Right cardiac atrium (tissue), 5 donors: ENCODE measurements at regions of chr1 and their contacts with region 1.

Region 1: GRCh38 chr1:9494929-9495758 is 44.1 kb upstream of the SLC25A33 start:
- DNase-seq: peak; percentile 55 to 86 (median 83)
- ATAC-seq: peak; percentile 68 to 75
- H3K4me3 ChIP-seq: no peak overlapping the region
- H3K27ac ChIP-seq: no peak overlapping the region
- H3K4me1 ChIP-seq: no peaks in the 10 kb centered on the region
- H3K27me3 ChIP-seq: no peaks in the 10 kb centered on the region

Region 2: GRCh38 chr1:9128520-9129265 is 366.5 kb before region 1 on chr1 and contains the start of gene GPR157:
- intact Hi-C with region 1: no loop called
- DNase-seq: peak; percentile 92 to 97 (median 97)
- ATAC-seq: peak; percentile 96 to 97
- H3K4me3 ChIP-seq: peak within 1 kb of the TSS; percentile 48
- H3K27ac ChIP-seq: peak within 1 kb of the TSS; percentile 82
- H3K4me1 ChIP-seq: no peaks in the 10 kb centered on the region
- H3K27me3 ChIP-seq: no peaks in the 10 kb centered on the region
- total RNA-seq, gene GPR157: 23.3 to 28.7 (median 25.9) TPM

Region 3: DNA sequence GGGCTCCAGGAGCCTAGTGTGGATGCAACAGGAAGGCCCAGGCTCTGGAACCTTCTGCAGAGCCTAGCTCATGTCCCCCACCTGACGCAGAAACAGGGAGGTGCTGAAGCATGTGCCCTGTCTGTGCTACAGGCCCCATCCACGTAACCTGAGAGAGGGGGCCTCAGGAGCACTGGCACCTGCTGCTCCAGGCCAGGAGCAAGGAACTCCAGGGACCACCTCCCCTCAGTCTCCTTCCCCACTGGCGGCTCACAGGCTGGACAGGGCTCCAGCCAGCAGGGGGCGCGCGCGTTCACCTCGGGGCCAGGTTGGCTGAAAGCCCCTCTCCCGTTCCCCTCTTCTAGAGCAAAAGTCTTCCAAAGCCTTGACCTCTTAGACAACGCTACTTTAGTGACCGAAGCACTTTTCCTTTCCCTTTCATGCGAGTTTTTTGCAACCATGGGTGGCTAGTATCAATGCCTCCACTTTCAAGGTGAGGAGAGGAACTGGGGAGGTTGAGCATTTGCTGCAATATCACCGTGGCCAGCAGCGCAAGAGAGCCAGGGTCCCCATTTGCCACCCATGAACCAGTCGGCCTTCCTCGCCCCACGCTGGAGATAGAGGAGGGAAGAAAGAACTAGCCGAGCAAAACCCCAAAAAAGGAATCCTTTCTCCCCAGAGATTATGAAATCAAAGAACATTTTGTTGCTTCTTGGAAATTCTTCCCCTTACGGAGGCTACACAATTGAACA is 313.8 kb before region 1 on chr1:
- intact Hi-C with region 1: loop called in 1 of 4 experiments (anchors 10 kb)
- DNase-seq: peak; percentile 71 to 89 (median 89)
- ATAC-seq: peak; percentile 70 to 71
- H3K4me3 ChIP-seq: peak overlapping the region; percentile 53
- H3K27ac ChIP-seq: no peak overlapping the region
- H3K4me1 ChIP-seq: no peaks in the 10 kb centered on the region
- H3K27me3 ChIP-seq: no peaks in the 10 kb centered on the region

Region 4: DNA sequence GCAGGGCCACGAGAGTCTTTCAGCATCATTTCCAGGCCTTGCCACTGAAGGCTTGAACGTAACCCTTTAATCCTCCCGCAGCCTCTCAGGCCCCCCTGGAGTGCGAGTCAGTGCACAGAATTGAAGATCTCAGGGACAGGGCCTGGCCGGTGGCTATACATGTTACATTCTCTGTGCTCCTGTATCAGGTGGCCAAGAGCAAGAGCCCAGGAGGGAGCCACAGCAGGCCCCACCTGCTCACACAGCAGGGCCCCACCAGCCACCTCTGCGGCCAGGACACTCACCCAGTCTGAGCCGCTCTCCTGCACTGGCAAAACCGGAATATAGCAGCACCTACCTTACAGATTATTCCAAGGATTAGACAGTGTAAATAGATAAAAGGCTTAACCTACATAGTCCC is 10.0 kb after region 1 on chr1:
- intact Hi-C with region 1: no loop called
- DNase-seq: no peak
- ATAC-seq: peak in 1 of 2 donors; percentile 26
- H3K4me3 ChIP-seq: no peak overlapping the region
- H3K27ac ChIP-seq: no peak overlapping the region
- H3K4me1 ChIP-seq: no peaks in the 10 kb centered on the region
- H3K27me3 ChIP-seq: no peaks in the 10 kb centered on the region

Region 5: GRCh38 chr1:9573723-9574122 is 78.6 kb after region 1 on chr1:
- intact Hi-C with region 1: loop called (anchors 2 to 5 kb)
- DNase-seq: no peak
- ATAC-seq: peak; percentile 30 to 49
- H3K4me3 ChIP-seq: no peak overlapping the region
- H3K27ac ChIP-seq: no peak overlapping the region
- H3K4me1 ChIP-seq: no peaks in the 10 kb centered on the region
- H3K27me3 ChIP-seq: no peaks in the 10 kb centered on the region